ENCODE measurements at regions of chr7 and their contacts with region 1.

Region 1: DNA sequence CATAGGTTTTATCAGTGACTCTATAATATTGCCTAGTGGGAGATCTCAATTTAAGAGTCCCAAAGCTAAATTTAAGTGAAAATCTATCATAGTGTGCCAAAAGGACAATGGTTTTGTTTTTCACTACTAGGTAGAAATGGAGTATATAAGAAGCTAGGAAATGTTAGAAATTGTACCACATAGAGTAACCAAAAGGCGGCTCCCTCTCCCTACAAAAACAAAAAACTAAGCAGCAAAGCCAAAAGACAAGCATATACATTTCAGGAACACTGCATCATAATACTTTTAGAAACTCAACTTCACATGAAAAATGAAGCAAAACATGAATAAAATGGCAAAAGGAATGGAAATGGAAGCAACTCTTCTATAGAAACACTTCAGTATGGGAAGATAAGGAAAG is 271.6 kb downstream of the CACNA2D1 start:
- DNase-seq: no peak
- H3K4me3 ChIP-seq: no peak overlapping the region
- H3K27ac ChIP-seq: peak overlapping the region in 5 of 59 donors; percentile 12 to 65 (median 16)
- H3K27me3 ChIP-seq: no peaks in the 10 kb centered on the region
- CTCF ChIP-seq: peak in 21 of 56 donors; percentile 9 to 41 (median 20)

Region 2: DNA sequence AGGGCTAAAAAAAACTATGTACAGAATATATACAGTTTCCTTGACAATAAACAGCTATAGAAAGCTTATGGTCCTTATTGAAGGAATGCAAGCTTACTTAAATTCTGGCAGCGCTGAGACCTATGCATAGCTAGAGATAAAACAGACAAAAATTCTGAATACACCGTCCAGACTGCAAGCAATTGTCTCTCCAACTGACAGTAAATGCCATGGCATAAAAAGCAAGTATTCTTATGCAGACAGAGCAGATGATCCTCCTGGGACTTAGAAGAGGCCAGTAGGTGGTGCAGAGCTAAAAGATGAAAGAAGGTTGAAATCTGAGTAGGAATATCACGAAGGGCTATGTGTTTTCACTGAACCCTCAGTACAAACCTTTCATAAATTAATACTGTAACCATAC is 428.5 kb after region 1 on chr7:
- intact Hi-C with region 1: loop called (anchors 5 to 10 kb)
- DNase-seq: no peak
- H3K4me3 ChIP-seq: peak overlapping the region in 17 of 59 donors; percentile 1 to 47 (median 18)
- H3K27ac ChIP-seq: peak overlapping the region in 55 of 59 donors; percentile 10 to 89 (median 75)
- H3K27me3 ChIP-seq: no peaks in the 10 kb centered on the region
- CTCF ChIP-seq: peak in 8 of 56 donors; percentile 6 to 18 (median 12)

Measured in dorsolateral prefrontal cortex (tissue), 120 donors.